ENCODE measurements at regions of chr1 and their contacts with region 1.

Region 1: GRCh38 chr1:53172426-53173128 is 24.0 kb upstream of the CPT2 start:
- DNase-seq: no peak
- H3K4me3 ChIP-seq: no peak overlapping the region
- H3K27ac ChIP-seq: no peak overlapping the region
- H3K4me1 ChIP-seq: 0 out of 2 replicates have a peak, but pooled peaks cover 5% of the 10 kb centered on the region
- H3K27me3 ChIP-seq: no peaks in the 10 kb centered on the region
- CTCF ChIP-seq: peak; percentile 20; the same call in 1 of the 2 replicates

Region 2: GRCh38 chr1:52814443-52814842 is 358.1 kb before region 1 on chr1:
- CTCF ChIA-PET with region 1: no interaction called
- POLR2A ChIA-PET with region 1: no interaction called
- intact Hi-C with region 1: no loop called
- DNase-seq: peak; percentile 7 to 70
- H3K4me3 ChIP-seq: no peak overlapping the region
- H3K27ac ChIP-seq: 0 out of 2 replicates have a peak overlapping the region, but pooled peaks have one; percentile 18
- H3K4me1 ChIP-seq: peaks cover 10% of the 10 kb centered on the region; the same call in 1 of the 2 replicates
- H3K27me3 ChIP-seq: no peaks in the 10 kb centered on the region
- CTCF ChIP-seq: no peak

Region 3: GRCh38 chr1:52927212-52928014 is 245.2 kb before region 1 on chr1 and contains the start of gene SCP2:
- CTCF ChIA-PET with region 1: interaction called, 10 read pairs
- POLR2A ChIA-PET with region 1: no interaction called
- intact Hi-C with region 1: no loop called
- DNase-seq: peak; percentile 45 to 71
- H3K4me3 ChIP-seq: peak within 1 kb of the TSS; percentile 97
- H3K27ac ChIP-seq: no peak within 1 kb of the TSS
- H3K4me1 ChIP-seq: 0 out of 2 replicates have a peak, but pooled peaks cover 9% of the 10 kb centered on the region
- H3K27me3 ChIP-seq: no peaks in the 10 kb centered on the region
- CTCF ChIP-seq: no peak
- total RNA-seq, gene SCP2: 87.8 and 95.8 TPM in 2 replicates

Region 4: DNA sequence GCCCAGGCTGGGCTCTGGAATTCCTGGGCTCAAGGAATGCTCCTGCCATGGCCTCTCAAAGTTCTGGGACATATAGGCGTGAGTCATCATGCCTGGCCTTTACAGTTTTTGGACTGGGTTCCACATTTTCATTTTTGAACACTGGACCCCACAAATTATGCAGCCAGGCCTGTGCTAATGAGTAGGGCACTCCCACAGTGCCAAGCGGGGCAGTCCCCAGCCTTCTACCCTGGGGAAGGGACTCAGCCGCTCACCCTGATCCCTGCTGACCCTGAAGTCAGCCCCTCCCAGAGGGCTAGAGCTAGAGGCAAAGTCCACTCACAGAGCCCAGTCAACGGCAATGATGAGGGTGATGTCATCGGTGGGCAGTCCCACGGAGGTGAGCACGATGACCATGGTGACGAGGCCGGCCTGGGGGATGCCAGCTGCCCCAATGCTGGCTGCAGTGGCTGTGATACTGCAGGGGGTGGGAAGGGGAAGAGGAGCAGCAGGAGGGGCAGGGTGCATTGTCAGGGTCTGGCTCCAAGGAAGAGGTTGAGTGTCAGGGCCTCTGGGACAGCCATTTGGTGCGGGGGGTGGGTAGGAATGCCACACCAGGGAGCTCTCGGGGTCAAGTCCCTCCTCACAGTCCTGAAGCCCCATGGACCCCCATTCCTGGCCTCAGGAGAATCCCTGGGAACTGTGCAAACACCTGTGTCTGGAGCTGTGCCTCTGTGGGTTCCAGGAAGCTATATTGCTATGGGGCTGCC is 82.9 kb before region 1 on chr1:
- CTCF ChIA-PET with region 1: no interaction called
- POLR2A ChIA-PET with region 1: no interaction called
- intact Hi-C with region 1: loop called (anchors 10 kb)
- DNase-seq: no peak
- H3K4me3 ChIP-seq: no peak overlapping the region
- H3K27ac ChIP-seq: no peak overlapping the region
- H3K4me1 ChIP-seq: peaks cover 9% of the 10 kb centered on the region; the same call in 1 of the 2 replicates
- H3K27me3 ChIP-seq: no peaks in the 10 kb centered on the region
- CTCF ChIP-seq: no peak

Measured in PC-9 (cell line).